ENCODE measurements at regions of chr6 and their contacts with region 1.

Region 1: DNA sequence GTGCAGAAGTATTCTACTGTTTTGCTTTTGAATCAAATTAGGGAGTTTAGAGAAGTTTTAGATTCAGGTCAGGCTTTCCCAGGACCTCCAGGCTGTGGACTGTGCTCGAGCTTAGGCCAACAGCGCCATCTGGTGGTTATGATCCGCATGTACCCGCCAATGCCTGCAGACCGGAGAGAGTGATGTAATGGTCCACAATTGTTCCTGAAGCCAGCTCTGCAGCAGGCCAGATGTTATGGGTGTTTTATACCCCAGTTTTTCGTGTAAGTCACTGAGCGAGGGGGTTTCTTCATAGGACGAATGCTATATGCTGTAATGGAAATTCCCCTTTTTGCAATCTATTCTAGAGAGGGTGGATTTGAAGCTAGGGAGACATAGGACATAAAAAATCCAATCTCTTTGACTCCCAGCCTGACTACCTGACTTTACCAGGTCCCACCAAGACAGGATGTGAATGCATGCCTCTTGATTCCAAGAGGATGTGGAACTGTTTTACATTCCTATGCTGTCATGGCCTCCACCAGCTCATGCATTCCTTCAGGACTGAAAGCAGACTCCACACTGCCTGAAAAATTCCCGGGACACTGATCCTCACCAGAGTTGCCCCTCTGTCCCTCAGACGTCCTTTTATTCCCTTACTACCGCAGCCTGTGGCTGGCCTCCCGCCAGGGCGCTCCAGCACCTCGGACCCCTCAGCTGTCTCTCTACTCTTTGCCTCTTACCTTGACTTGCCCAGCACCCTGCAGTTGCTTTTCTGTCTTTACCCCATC is 41.2 kb upstream of the LY86 start:
- DNase-seq: peak; percentile 74
- H3K4me3 Mint-ChIP-seq: peak overlapping the region; percentile 56
- H3K27ac Mint-ChIP-seq: peak overlapping the region; percentile 40
- H3K4me1 Mint-ChIP-seq: peaks cover 18% of the 10 kb centered on the region
- H3K27me3 Mint-ChIP-seq: peaks cover 64% of the 10 kb centered on the region

Region 2: GRCh38 chr6:5143634-5144311 is 1403.5 kb before region 1 on chr6:
- intact Hi-C with region 1: loop called (anchors 2 kb)
- DNase-seq: peak; percentile 68
- H3K4me3 Mint-ChIP-seq: no peak overlapping the region
- H3K27ac Mint-ChIP-seq: no peak overlapping the region
- H3K4me1 Mint-ChIP-seq: peaks cover 10% of the 10 kb centered on the region
- H3K27me3 Mint-ChIP-seq: no peaks in the 10 kb centered on the region

Region 3: GRCh38 chr6:6008648-6009421 is 538.5 kb before region 1 on chr6:
- intact Hi-C with region 1: loop called (anchors 2 kb)
- DNase-seq: peak; percentile 54
- H3K4me3 Mint-ChIP-seq: peak overlapping the region; percentile 81
- H3K27ac Mint-ChIP-seq: peak overlapping the region; percentile 40
- H3K4me1 Mint-ChIP-seq: peaks cover 38% of the 10 kb centered on the region
- H3K27me3 Mint-ChIP-seq: peaks cover 70% of the 10 kb centered on the region

Region 4: DNA sequence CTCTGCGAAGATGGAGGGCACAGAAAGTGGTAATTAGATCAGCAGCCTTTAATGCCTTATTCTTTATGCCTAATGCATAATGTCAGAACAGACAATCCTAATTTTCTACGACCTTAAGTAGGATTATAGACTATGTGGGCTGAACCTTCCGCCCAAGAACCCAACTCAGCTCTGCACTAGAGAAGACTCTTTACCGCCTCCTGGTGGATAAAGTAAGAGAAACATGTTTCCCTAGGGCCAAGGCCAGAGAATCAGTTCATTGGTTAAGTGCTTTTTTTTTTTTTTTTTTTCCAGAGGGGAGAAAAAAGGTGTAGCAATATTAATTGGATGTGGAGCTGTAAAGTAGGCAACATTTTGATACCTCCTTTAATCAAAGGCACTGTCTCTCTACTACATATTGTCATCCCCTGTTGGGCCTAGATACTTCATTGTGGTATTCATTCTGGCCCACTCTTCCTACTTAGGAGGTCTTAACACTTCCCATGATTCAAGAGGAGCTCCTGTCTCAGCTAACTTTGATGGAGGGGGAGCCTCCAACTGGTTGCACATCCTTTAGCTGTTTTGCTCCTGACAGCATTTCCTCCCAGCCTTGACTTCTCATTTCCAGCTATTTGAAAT is 415.7 kb before region 1 on chr6:
- intact Hi-C with region 1: loop called (anchors 5 kb)
- DNase-seq: no peak
- H3K4me3 Mint-ChIP-seq: no peak overlapping the region
- H3K27ac Mint-ChIP-seq: no peak overlapping the region
- H3K4me1 Mint-ChIP-seq: no peaks in the 10 kb centered on the region
- H3K27me3 Mint-ChIP-seq: peaks cover 2% of the 10 kb centered on the region

Region 5: DNA sequence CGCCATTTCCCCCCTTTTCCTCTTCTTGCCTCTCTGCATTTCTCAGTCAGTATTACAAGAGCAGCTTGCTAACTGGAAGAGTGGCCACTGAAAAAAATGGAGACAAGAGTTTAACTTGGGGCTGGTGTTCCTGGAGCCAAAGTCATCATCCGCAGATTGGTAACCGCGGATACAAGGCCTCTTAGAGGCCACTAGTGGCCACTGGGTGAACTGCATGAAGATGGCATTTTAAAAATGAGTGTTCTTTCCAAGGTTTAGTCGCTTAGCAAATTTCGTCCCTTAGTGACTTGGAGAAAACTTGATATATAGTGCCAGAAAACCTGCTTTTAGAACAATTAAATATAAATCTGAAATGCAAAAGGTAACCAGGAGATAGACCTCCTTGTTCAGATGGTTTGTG is 231.6 kb before region 1 on chr6:
- intact Hi-C with region 1: loop called (anchors 10 kb)
- DNase-seq: no peak
- H3K4me3 Mint-ChIP-seq: no peak overlapping the region
- H3K27ac Mint-ChIP-seq: no peak overlapping the region
- H3K4me1 Mint-ChIP-seq: no peaks in the 10 kb centered on the region
- H3K27me3 Mint-ChIP-seq: peaks cover 32% of the 10 kb centered on the region

Region 6: GRCh38 chr6:7166410-7167305 is 619.4 kb after region 1 on chr6:
- intact Hi-C with region 1: no loop called
- DNase-seq: no peak
- H3K4me3 Mint-ChIP-seq: no peak overlapping the region
- H3K27ac Mint-ChIP-seq: no peak overlapping the region
- H3K4me1 Mint-ChIP-seq: no peaks in the 10 kb centered on the region
- H3K27me3 Mint-ChIP-seq: no peaks in the 10 kb centered on the region